ENCODE measurements at regions of chr3 and their contacts with region 1.

Region 1: DNA sequence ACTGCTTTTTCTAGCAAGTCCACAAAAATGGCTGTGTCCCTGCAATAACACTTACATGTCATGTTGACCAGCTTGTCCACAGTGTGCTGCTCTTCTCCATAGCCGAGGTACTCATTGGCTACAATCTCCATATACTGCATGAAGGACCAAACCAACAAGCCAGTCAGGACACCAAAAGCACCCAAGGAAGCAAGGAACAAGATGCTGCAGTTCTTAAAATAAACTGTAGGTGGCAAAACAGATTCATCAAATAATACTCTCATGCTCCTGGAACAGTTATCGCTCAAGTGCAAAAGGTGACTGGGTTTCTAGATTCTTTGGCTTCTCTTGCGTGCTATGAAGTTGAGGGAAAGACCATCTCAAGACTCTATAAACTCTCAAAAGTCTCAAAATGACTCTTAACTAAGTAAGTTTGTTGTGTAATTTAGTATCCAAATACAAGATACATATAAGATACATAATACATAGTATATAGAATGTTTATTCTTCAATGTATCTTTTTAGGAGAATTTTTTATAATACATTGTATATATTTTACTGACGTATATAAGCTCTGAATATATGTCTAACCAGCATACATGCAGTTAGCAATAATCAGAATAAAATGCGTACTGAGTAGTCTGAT is 57.0 kb downstream of the NEK10 start:
- DNase-seq: no peak
- ATAC-seq: peak; percentile 56 to 87
- H3K4me3 ChIP-seq: no peak overlapping the region
- H3K27ac ChIP-seq: no peak overlapping the region
- H3K4me1 ChIP-seq: peaks cover 0 to 4% of the 10 kb centered on the region in 2 donors
- H3K27me3 ChIP-seq: no peaks in the 10 kb centered on the region
- CTCF ChIP-seq: peak; percentile 69 to 81 (median 77)
- POLR2A ChIP-seq: no peak

Region 2: DNA sequence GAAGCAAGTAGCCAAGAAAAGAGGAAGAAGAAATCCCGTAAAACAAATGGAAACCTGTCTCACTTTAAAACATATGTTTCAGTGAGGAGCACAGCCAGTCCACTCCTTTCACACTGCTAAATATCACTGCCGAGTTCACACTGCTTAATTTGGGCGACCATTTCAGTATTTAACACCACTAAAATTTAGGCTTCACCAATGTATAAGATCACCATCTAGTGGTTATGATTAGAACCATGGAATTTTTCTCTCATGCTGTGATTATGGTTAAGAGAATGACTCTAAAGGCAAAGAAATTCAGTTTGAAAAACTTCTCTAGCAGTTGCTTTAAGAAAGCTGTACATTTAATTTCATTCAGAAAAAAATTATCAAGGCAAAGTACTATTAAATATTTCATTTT is 155.4 kb after region 1 on chr3:
- in situ Hi-C with region 1: loop called (anchors 5 to 25 kb)
- intact Hi-C with region 1: loop called (anchors 2 kb)
- DNase-seq: no peak
- ATAC-seq: peak; percentile 65 to 91
- H3K4me3 ChIP-seq: no peak overlapping the region
- H3K27ac ChIP-seq: peak overlapping the region in 1 of 4 donors; percentile 36
- H3K4me1 ChIP-seq: peaks cover 4 to 9% of the 10 kb centered on the region in 2 donors
- H3K27me3 ChIP-seq: no peaks in the 10 kb centered on the region
- CTCF ChIP-seq: peak; percentile 42 to 62 (median 44)
- POLR2A ChIP-seq: no peak

Region 3: DNA sequence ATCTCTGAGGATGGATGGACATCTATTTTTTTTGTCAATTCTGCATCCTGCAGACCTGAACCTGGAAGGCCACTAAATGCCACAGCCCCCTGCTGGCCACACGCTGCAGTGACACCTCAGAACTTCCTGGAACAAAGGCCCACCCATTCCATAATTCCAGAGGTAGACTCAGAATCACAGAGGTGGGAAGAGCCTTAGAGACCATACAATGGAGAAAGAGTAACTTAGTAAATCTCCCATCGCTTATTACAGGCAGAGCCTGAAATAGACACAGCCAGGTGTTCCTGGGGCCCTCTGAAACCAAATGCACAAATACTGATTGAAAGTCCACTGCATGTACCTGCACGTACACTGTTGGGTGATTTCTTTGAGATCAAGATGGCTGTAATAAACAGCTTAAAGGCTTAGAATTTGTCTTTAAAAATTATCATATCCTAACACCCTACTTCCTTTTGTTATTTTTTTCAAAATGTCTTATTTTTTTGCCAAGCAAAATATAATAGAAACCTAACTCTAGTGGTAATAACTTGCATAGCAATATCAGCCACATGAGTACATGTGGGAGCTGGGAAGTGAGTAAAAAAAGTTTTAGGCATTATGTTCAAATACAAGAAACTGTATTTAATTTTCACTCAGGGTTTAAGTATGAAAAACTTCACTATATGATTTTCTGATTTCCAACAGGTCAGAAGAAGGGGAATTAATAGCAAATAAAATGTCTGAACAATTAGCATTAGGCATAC is 347.3 kb after region 1 on chr3:
- in situ Hi-C with region 1: no loop called
- intact Hi-C with region 1: loop called (anchors 5 kb)
- DNase-seq: peak in 1 of 2 donors; percentile 26
- ATAC-seq: no peak
- H3K4me3 ChIP-seq: no peak overlapping the region
- H3K27ac ChIP-seq: no peak overlapping the region
- H3K4me1 ChIP-seq: no peaks in the 10 kb centered on the region
- H3K27me3 ChIP-seq: no peaks in the 10 kb centered on the region
- CTCF ChIP-seq: peak; percentile 20 to 71 (median 60)
- POLR2A ChIP-seq: no peak

Region 4: GRCh38 chr3:27681245-27681748 is 369.1 kb after region 1 on chr3:
- in situ Hi-C with region 1: loop called (anchors 10 to 25 kb)
- intact Hi-C with region 1: no loop called
- DNase-seq: no peak
- ATAC-seq: peak in 1 of 2 donors; percentile 55
- H3K4me3 ChIP-seq: no peak overlapping the region
- H3K27ac ChIP-seq: no peak overlapping the region
- H3K4me1 ChIP-seq: peaks cover 0 to 3% of the 10 kb centered on the region in 2 donors
- H3K27me3 ChIP-seq: no peaks in the 10 kb centered on the region
- CTCF ChIP-seq: peak; percentile 27 to 52 (median 45)
- POLR2A ChIP-seq: no peak

Measured in gastrocnemius medialis (tissue), 4 donors.